ENCODE measurements at regions of chr1 and their contacts with region 1.

Region 1: GRCh38 chr1:9004700-9005394 is 21.4 kb downstream of the SLC2A7 start:
- DNase-seq: peak; percentile 80
- H3K4me3 ChIP-seq: no peak overlapping the region; a peak in 1 of 4 replicates
- H3K27ac ChIP-seq: no peak overlapping the region
- H3K4me1 ChIP-seq: no peaks in the 10 kb centered on the region
- H3K27me3 ChIP-seq: no peaks in the 10 kb centered on the region
- CTCF ChIP-seq: peak; percentile 76
- EP300 ChIP-seq: no peak
- RAD21 ChIP-seq: peak; percentile 52

Region 2: DNA sequence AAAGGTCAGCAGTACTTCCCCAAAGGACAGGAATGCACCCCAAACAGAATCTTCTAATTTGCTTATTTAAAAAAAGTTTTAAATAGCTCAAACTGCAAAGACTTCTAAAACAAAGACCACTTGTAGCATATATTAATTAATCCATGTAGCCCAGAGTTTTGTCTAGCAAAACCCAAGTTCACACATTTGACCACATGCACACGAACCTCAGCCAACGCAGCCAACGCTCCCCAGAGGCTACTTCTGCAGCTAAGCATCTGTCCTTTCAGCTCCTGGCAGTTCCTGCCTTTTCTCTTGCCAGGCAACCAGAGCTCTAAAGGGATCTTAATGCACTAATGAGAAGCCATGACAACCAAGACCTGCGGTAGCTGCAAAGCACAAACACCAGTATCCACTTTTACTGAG is 277.0 kb before region 1 on chr1:
- CTCF ChIA-PET with region 1: no interaction called
- POLR2A ChIA-PET with region 1: no interaction called
- DNase-seq: peak; percentile 70
- H3K4me3 ChIP-seq: no peak overlapping the region
- H3K27ac ChIP-seq: peak overlapping the region in 1 of 2 experiments; percentile 56; a peak in 1 of 4 replicates
- H3K4me1 ChIP-seq: peaks cover 0 to 4% of the 10 kb centered on the region in 2 experiments; a peak in 2 of 4 replicates
- H3K27me3 ChIP-seq: no peaks in the 10 kb centered on the region
- CTCF ChIP-seq: no peak
- EP300 ChIP-seq: peak in 1 of 2 experiments; percentile 64; a peak in 1 of 4 replicates
- RAD21 ChIP-seq: peak; percentile 41; the same call in 1 of the 2 replicates

Region 3: GRCh38 chr1:8911416-8911815 is 93.4 kb before region 1 on chr1:
- CTCF ChIA-PET with region 1: interaction called, 11 read pairs
- POLR2A ChIA-PET with region 1: no interaction called
- DNase-seq: no peak
- H3K4me3 ChIP-seq: no peak overlapping the region
- H3K27ac ChIP-seq: no peak overlapping the region
- H3K4me1 ChIP-seq: no peaks in the 10 kb centered on the region
- H3K27me3 ChIP-seq: no peaks in the 10 kb centered on the region
- CTCF ChIP-seq: no peak
- EP300 ChIP-seq: no peak
- RAD21 ChIP-seq: no peak

Region 4: DNA sequence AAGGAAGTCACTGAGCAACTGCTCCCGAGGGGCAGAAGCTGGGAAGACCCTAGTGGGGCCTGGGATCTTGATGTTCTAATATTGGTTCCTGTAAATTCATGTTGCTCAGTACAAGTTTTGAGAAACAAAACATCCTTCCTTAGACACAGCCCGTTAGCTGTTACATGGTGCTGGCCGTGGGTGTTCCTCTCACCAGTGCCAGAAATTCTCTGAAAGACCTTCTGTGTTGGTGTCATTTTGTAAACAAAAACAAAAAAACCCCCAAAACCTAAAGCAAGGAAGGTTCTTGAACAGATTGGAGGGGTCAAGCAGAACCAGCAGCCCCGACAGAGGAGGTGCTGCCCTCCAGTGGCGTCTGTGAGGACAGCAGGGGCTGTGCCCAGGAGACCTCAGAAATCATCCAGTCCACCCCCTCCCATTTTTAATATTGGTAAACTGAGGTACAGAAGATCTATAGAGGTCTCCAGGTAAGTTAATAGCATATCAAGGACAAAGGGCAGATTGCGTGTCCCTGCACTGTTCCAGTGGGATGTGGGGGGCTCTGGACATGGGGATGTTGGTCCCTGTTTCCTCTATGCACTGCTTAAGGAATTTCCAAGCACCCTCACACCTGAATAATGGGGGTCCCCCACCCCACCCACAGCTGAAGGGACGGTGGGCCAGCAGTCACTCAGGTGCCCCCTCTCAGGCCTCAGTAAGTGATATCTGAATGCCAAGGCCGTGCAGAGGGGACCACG is 16.8 kb before region 1 on chr1:
- CTCF ChIA-PET with region 1: interaction called, 24 read pairs
- POLR2A ChIA-PET with region 1: no interaction called
- DNase-seq: peak; percentile 78
- H3K4me3 ChIP-seq: no peak overlapping the region; a peak in 1 of 4 replicates
- H3K27ac ChIP-seq: peak overlapping the region in 1 of 2 experiments; percentile 45; a peak in 1 of 4 replicates
- H3K4me1 ChIP-seq: no peaks in the 10 kb centered on the region; a peak in 1 of 4 replicates
- H3K27me3 ChIP-seq: no peaks in the 10 kb centered on the region
- CTCF ChIP-seq: peak; percentile 89
- EP300 ChIP-seq: no peak
- RAD21 ChIP-seq: peak; percentile 80

Region 5: GRCh38 chr1:8992936-8993687 is 11.7 kb before region 1 on chr1:
- CTCF ChIA-PET with region 1: interaction called, 24 read pairs
- POLR2A ChIA-PET with region 1: no interaction called
- DNase-seq: no peak
- H3K4me3 ChIP-seq: no peak overlapping the region
- H3K27ac ChIP-seq: no peak overlapping the region
- H3K4me1 ChIP-seq: no peaks in the 10 kb centered on the region; a peak in 1 of 4 replicates
- H3K27me3 ChIP-seq: no peaks in the 10 kb centered on the region
- CTCF ChIP-seq: peak; percentile 35; the same call in 1 of the 2 replicates
- EP300 ChIP-seq: no peak
- RAD21 ChIP-seq: no peak